Ovary (tissue), 10 donors: ENCODE measurements at regions of chr3 and their contacts with region 1.

Region 1: GRCh38 chr3:169575373-169575772 is 88.1 kb downstream of the MECOM start:
- DNase-seq: no peak
- H3K4me3 ChIP-seq: no peak overlapping the region
- H3K27ac ChIP-seq: no peak overlapping the region
- H3K4me1 ChIP-seq: no peaks in the 10 kb centered on the region
- H3K27me3 ChIP-seq: no peaks in the 10 kb centered on the region
- CTCF ChIP-seq: no peak
- EP300 ChIP-seq: no peak
- POLR2A ChIP-seq: no peak

Region 2: GRCh38 chr3:170977911-170978310 is 1402.5 kb after region 1 on chr3:
- intact Hi-C with region 1: loop called in 1 of 4 experiments (anchors 10 kb)
- DNase-seq: no peak
- H3K4me3 ChIP-seq: no peak overlapping the region
- H3K27ac ChIP-seq: no peak overlapping the region
- H3K4me1 ChIP-seq: no peaks in the 10 kb centered on the region
- H3K27me3 ChIP-seq: no peaks in the 10 kb centered on the region
- CTCF ChIP-seq: no peak
- EP300 ChIP-seq: no peak
- POLR2A ChIP-seq: no peak